Cardiac septum (tissue), 1 donor: ENCODE measurements at regions of chr3 and their contacts with region 1.

Region 1: GRCh38 chr3:25594007-25594502 is 70.7 kb downstream of the TOP2B start:
- DNase-seq: no peak

Region 2: DNA sequence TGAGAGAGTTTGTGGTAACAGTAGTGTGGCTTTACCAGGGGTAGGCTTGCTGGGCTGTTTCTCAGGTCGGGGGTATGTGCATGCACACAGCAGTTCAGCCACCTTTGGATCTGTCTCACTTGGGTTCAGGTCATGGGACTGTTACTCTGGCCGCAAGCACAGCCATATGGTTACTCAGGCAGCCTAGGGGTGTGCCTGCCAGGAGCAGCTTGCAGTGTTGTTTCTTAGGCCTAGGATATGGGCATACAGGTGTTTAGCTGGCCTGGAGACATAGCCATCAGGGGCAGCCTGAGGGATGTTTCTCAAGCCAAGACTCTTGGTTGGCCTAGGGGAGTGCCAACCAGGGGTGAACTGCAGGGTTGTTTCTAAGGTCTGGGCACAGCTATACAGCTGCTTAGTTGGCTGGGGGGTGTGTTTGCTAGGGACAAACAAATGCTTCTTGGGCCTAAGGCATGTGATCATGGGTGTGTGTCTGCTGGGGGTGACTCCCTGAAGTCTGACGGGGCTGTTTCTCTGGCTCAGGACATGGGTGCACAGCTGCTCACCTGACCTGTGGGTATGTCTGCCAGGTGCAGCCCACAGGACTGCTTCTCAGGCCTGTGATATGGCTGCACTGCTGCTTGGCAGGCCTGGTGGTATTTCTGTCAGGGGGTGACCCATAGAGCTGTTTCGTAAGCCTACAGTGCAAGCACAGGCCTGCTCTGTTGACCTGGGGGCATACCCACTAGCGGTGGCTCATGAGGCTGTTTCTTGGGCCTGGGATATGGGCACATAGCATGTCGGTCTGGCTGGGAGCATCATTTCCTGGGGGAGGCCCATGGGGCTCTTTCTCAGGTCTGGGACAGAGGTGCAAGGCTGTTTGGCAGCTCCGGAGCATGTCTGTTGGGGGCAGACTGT is 931.4 kb before region 1 on chr3:
- intact Hi-C with region 1: no loop called
- DNase-seq: no peak

Region 3: DNA sequence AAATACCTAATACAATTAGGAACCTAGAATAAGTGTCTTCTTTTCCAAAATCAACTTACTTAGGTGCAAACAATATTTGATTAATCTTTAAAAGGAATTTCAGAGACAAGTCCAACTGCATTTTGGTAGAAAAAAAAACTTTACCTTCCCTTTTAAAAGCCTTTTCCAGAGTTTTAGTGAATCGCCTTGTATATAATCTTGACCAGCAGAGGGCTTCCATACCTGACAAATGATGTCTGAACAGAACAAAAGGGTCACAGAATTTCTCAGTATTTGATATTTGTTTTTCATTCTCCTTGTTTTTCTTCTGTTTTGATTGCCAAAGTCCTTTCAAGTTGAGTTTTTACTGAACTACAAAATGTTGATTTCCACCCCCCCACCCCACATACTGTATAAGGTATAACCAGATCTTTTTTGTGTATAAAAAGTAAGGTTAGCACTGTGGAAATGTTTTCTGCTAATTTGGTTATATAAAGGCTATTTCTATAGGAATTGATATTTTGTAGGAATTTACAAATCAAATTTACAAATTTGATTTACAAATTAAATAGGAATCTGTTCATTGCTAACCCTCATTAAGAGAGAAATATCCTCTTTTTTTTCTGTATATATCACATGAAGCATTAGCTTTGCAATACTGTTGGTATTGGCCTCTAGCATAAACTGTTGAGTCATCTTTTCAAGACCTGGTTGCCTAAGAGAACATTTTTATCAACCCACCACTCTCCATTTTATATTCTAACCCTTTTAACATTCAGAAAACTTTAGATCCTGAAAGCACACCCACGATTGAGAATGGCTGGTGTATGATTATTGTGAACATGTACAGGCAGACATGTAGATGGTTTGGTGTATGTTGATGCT is 630.1 kb before region 1 on chr3:
- intact Hi-C with region 1: loop called (anchors 5 kb)
- DNase-seq: no peak

Region 4: GRCh38 chr3:25021816-25022215 is 572.2 kb before region 1 on chr3:
- intact Hi-C with region 1: loop called (anchors 5 kb)
- DNase-seq: no peak

Region 5: GRCh38 chr3:25044762-25045710 is 549.0 kb before region 1 on chr3:
- intact Hi-C with region 1: loop called (anchors 5 kb)
- DNase-seq: no peak

Region 6: GRCh38 chr3:25151281-25151902 is 442.7 kb before region 1 on chr3:
- intact Hi-C with region 1: loop called (anchors 5 kb)
- DNase-seq: no peak

Region 7: DNA sequence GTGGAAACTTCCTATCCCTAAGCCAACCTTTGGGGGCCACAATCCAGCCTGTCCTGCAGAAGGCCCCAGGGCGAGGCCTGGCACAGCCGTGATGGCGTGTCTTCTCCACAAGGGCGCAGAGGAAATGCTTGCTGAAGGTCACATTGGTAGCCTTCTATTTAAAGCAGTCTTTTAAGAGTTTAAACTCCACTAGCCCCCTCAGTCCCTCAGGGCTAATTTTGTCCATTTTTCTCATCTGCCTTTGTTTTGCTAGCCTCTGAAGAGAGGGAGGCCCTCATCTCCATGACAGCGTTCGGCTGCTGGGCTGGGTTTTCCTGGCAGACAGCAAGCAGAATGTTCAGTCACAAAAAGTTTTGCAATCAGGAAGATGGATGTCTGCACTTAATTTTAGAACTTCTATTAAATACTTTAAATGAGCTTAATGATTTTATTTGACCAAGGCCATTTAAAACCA is 125.2 kb before region 1 on chr3:
- intact Hi-C with region 1: loop called (anchors 5 kb)
- DNase-seq: peak; percentile 82

Region 8: DNA sequence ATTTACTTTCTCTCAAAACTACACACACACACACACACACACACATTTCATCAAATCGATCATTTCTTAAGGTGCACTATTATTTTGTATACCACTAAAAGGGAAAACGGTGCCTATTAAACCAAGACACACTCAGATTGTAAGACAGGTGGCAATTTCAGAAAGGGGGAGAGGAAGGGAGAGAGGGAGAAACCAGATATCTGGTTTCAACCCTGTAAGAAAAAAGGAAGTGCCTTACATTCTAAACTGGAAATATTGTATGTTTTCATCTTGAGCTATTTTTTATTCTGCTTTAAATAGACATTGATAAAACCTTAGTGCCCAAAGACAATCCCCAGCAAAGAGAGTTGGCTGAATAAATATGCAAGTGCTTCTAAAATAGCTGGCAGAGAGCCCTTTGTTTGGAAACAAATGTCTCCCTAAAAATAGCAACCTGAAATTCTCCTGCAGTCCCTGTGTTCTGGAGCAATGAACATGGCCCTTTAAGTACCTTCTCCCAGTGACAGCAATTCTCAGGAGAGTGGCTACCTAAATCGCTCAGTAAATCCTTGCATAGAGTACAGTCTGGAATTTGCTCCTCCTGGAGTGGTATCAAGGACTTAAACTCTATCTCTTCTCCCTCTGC is 80.3 kb before region 1 on chr3:
- intact Hi-C with region 1: loop called (anchors 2 kb)
- DNase-seq: no peak